Endothelial cell of umbilical vein (primary cell): ENCODE measurements at regions of chr6 and their contacts with region 1.

Region 1: GRCh38 chr6:138509371-138509770 is 10.1 kb upstream of the NHSL1 start:
- DNase-seq: peak; percentile 59
- H3K4me3 ChIP-seq: no peak overlapping the region
- H3K27ac ChIP-seq: no peak overlapping the region
- H3K4me1 ChIP-seq: no peaks in the 10 kb centered on the region
- H3K27me3 ChIP-seq: no peaks in the 10 kb centered on the region
- CTCF ChIP-seq: peak; percentile 37 to 38
- POLR2A ChIP-seq: no peak

Region 2: DNA sequence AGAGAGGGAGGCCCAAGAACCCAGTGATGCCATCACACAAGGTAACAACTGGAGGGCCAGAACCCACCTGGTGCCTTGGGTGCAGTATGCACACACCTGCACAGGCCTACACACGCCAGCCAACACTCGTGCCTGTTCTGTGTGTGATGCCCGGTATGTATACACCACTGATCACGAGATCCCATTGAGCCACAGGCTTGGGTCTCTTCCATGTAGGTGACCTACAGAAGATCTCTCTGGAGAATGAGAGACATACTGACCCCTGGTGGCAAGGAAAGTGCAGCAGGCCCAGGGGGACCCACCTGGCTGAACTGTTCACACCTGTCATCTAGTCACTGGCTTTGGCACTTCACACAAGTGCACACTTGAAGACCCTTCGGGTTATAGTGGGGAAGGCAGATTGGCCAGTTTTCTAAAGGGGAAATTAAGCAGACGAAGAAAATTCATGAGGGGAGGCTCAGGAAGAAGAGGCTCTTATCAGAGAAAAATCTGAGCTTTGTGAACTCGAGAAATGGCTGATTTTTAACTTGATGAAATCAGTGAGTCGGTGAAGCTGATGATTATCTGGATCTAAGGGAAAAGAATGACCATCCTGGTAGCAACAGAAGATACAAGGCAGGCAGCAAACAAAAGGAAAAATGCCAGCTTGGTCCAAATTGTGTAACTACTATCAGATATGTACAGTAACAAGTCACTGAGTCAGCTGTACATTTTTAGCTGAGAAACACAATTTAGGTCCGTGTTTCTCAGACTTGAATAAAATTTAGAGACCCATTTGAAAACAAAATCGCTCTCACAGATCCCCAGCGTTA is 222.0 kb before region 1 on chr6:
- CTCF ChIA-PET with region 1: interaction called, 4 read pairs
- POLR2A ChIA-PET with region 1: no interaction called
- dilution Hi-C with region 1: no loop called
- intact Hi-C with region 1: loop called (anchors 5 kb)
- DNase-seq: peak; percentile 29
- H3K4me3 ChIP-seq: no peak overlapping the region
- H3K27ac ChIP-seq: no peak overlapping the region
- H3K4me1 ChIP-seq: peaks cover 3% of the 10 kb centered on the region
- H3K27me3 ChIP-seq: no peaks in the 10 kb centered on the region
- CTCF ChIP-seq: peak; percentile 43 to 67
- POLR2A ChIP-seq: no peak

Region 3: DNA sequence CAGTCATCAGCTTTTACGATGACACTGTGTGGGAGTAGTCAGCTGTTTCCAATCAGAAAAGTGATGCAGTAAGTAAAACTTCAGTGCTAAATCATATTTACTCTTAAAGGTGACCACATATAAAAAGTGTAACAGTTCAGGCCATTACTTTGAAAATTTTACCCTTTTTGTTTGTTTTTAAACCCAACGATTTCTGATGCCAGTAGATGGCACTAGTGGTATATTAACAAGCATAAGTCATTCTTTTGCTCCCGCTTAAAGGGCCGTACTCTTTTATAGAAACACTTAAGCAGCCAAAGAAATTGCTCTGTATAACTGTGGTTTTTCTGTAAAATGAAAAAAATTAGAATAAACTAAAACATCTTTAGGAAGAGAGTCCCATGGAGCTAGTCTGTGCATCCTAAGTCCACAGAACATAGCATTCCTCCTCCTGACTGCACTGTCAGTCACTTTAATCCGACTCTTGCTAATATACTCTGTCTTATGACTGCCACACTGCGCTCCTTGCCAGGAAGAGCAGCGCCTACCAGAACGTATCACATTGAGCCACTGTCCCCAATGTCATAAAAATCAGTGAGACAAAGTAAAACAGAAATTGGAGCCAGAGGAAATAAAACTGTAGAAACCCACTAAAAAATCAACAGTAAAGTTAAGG is 80.3 kb before region 1 on chr6:
- CTCF ChIA-PET with region 1: interaction called, 21 read pairs
- POLR2A ChIA-PET with region 1: no interaction called
- dilution Hi-C with region 1: no loop called
- intact Hi-C with region 1: loop called (anchors 1 kb)
- DNase-seq: peak; percentile 62
- H3K4me3 ChIP-seq: no peak overlapping the region
- H3K27ac ChIP-seq: no peak overlapping the region
- H3K4me1 ChIP-seq: no peaks in the 10 kb centered on the region
- H3K27me3 ChIP-seq: no peaks in the 10 kb centered on the region
- CTCF ChIP-seq: peak; percentile 36 to 41
- POLR2A ChIP-seq: no peak

Region 4: GRCh38 chr6:138434925-138435324 is 74.4 kb before region 1 on chr6:
- CTCF ChIA-PET with region 1: interaction called, 21 read pairs
- POLR2A ChIA-PET with region 1: no interaction called
- dilution Hi-C with region 1: no loop called
- intact Hi-C with region 1: no loop called
- DNase-seq: no peak
- H3K4me3 ChIP-seq: no peak overlapping the region
- H3K27ac ChIP-seq: no peak overlapping the region
- H3K4me1 ChIP-seq: no peaks in the 10 kb centered on the region
- H3K27me3 ChIP-seq: no peaks in the 10 kb centered on the region
- CTCF ChIP-seq: no peak
- POLR2A ChIP-seq: no peak

Region 5: DNA sequence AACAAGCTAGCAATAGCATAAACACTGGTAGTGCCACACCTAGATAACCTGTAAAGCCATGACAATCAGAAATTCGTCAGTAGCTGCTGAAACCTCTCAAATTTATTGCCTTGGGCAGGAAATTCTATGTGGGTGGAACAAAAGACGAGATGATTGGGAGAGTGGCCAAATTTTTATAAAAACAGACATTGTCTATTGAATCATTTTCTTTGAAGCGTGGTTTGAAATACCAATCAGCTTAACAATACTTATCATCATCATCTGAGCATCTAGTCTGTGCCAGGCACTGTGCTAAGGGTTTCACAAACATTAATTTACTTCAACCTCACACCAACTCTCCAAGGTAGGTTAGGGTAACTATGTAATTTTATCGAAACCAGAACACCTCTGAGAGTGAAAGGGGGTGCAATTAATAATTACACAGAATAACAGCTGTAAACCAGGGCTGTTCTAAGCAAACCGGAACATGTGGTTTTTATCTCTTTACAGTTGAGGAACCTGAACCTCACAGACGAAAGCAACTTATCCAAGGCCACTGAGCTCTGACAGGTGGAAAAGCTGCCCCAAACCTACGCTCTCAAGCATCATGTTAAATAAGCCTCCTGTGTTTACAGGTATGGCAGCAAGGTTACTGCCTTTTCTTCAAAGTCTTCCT is 53.5 kb before region 1 on chr6:
- CTCF ChIA-PET with region 1: interaction called, 11 read pairs
- POLR2A ChIA-PET with region 1: no interaction called
- dilution Hi-C with region 1: no loop called
- intact Hi-C with region 1: no loop called
- DNase-seq: peak; percentile 83
- H3K4me3 ChIP-seq: peak overlapping the region in 1 of 3 experiments; percentile 17
- H3K27ac ChIP-seq: peak overlapping the region; percentile 26
- H3K4me1 ChIP-seq: peaks cover 24% of the 10 kb centered on the region
- H3K27me3 ChIP-seq: no peaks in the 10 kb centered on the region
- CTCF ChIP-seq: no peak
- POLR2A ChIP-seq: no peak